ENCODE measurements at regions of chr16 and their contacts with region 1.

Region 1: GRCh38 chr16:23896832-23897821 is 61.3 kb downstream of the PRKCB start:
- DNase-seq: no peak
- ATAC-seq: no peak
- H3K4me3 ChIP-seq: no peak overlapping the region
- H3K27ac ChIP-seq: no peak overlapping the region
- H3K4me1 ChIP-seq: no peaks in the 10 kb centered on the region
- H3K27me3 ChIP-seq: peaks cover 20% of the 10 kb centered on the region
- CTCF ChIP-seq: no peak
- POLR2A ChIP-seq: no peak
- RAD21 ChIP-seq: no peak

Region 2: DNA sequence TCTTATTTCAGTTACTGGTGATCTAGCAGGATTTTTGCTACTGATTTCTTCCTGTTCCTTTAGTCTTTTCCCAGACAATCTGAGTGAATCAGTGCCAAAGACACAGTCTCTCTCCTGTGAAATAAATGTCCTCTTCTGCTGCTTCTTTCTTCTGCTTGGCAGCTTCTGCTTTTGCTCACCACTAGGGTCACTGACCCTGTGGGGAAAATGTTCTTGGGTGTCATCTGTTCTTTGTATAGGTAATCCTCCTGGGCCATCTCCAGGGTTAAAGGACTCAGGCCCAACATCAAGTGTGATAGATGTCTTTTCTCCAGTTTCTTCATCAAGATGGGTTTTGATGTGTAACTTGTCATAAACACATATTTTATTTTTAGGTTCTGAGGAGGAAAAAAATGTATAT is 261.2 kb before region 1 on chr16:
- CTCF ChIA-PET with region 1: no interaction called
- POLR2A ChIA-PET with region 1: no interaction called
- RAD21 ChIA-PET with region 1: no interaction called
- intact Hi-C with region 1: no loop called
- DNase-seq: no peak
- ATAC-seq: no peak
- H3K4me3 ChIP-seq: no peak overlapping the region
- H3K27ac ChIP-seq: no peak overlapping the region
- H3K4me1 ChIP-seq: peaks cover 0 to 13% of the 10 kb centered on the region in 2 experiments; a peak in 2 of 4 replicates
- H3K27me3 ChIP-seq: no peaks in the 10 kb centered on the region
- CTCF ChIP-seq: no peak
- POLR2A ChIP-seq: no peak
- RAD21 ChIP-seq: no peak

Region 3: DNA sequence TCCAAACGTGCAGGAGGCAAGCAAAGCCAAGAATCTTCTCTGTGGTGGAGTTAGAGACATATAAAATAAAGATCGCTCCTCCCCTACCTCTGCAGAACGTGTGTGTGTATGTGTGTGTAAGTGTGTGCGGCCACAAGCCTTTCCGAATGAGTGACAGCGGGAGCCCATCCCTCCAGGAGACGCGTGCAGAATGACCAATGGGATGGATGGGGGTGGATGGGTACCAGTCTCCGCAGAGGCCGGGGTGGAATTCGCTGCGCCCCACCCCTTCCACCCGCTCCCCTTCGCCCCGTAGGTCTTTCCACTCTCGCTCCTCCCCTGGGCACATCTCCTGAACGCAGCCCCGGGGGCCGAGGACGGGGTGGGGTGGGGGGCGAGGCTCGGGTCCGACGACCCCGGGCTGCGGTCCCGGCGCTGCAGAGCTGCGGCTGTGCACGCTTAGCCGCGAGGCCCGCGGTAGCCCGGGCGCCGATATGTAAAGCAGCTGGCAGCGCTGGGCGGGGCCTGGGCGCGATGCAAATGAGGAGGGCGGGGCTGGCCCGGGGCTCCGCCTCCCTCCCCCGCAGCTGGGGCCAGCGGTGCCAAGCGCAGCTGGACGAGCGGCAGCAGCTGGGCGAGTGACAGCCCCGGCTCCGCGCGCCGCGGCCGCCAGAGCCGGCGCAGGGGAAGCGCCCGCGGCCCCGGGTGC is 61.6 kb before region 1 on chr16 and contains the start of gene PRKCB:
- CTCF ChIA-PET with region 1: no interaction called
- POLR2A ChIA-PET with region 1: no interaction called
- RAD21 ChIA-PET with region 1: no interaction called
- intact Hi-C with region 1: loop called (anchors 10 kb)
- DNase-seq: no peak
- ATAC-seq: peak; percentile 17; the same call in 1 of the 2 replicates
- H3K4me3 ChIP-seq: no peak within 1 kb of the TSS
- H3K27ac ChIP-seq: no peak within 1 kb of the TSS
- H3K4me1 ChIP-seq: no peaks in the 10 kb centered on the region
- H3K27me3 ChIP-seq: peaks cover 26% of the 10 kb centered on the region
- CTCF ChIP-seq: no peak
- POLR2A ChIP-seq: no peak
- RAD21 ChIP-seq: no peak
- total RNA-seq, gene PRKCB: 0.89 TPM

Region 4: DNA sequence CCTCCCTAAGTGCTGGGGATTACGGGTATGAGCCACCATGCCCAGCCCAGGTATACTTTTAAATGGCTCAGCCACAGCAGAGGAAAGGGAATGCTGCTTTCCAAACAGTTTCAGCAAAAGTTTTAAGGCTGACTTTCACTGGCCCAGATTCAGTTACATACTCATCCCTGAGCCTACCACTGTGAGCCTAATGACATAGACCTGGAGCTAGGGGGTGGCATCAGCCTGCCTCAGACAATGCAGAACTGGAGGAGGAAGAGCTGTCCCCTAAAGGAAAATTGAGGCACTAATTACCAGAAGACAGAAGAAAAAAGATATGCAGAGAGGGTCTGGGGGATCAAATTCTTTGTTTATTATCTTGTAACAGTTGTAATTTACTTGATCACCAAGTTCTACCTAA is 1838.5 kb after region 1 on chr16:
- CTCF ChIA-PET with region 1: no interaction called
- POLR2A ChIA-PET with region 1: no interaction called
- RAD21 ChIA-PET with region 1: no interaction called
- intact Hi-C with region 1: no loop called
- DNase-seq: no peak
- ATAC-seq: no peak
- H3K4me3 ChIP-seq: no peak overlapping the region
- H3K27ac ChIP-seq: no peak overlapping the region
- H3K4me1 ChIP-seq: no peaks in the 10 kb centered on the region
- H3K27me3 ChIP-seq: 0 out of 2 replicates have a peak, but pooled peaks cover 8% of the 10 kb centered on the region
- CTCF ChIP-seq: no peak
- POLR2A ChIP-seq: no peak
- RAD21 ChIP-seq: no peak